Mammary epithelial cell (primary cell): ENCODE measurements at regions of chr17 and their contacts with region 1.

Region 1: DNA sequence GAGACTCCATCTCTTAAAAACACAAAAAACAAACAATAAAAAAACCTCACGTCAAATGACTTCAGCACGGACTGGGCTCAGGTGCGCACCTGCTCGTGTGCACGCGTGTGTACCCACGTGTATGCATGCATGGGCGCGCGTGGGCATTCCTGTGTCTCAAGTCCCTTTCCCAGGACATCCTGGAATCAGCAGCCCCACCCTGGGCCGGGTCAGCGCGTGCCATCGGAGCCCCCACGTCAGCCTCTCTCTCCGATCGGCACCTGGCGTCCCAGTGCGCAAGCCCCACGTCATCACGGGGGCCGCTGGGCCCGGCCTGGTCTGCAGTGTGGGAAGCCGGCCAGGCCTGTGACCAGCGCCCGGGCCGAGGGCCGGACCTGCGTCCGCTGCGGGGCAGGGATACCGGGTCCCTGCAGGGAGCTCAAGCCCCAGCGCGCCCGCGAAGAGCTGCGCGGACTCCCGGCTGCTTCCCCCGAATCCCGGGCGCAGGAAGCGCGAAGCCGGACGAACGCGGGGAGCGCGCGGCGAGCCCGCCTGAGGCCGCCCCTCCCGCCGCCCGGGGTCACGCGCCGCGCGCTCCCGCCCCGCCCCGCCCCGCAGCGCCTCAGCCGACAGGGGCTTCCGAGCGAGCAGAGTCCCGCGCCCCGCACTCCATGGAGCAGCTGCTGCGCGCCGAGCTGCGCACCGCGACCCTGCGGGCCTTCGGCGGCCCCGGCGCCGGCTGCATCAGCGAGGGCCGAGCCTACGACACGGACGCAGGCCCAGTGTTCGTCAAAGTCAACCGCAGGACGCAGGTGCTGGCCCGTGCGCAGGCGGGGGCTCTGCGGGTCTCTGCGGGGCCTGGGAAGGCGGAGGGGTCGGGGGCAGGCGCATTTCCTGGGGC is at the start of gene FN3K:
- DNase-seq: peak; percentile 29
- H3K4me3 ChIP-seq: peak within 1 kb of the TSS; percentile 50 to 56 (median 52)
- H3K27ac ChIP-seq: no peak within 1 kb of the TSS
- H3K4me1 ChIP-seq: peaks cover 7% of the 10 kb centered on the region
- H3K27me3 ChIP-seq: no peaks in the 10 kb centered on the region
- CTCF ChIP-seq: no peak
- total RNA-seq, gene FN3K: 2.2 to 4.2 TPM

Region 2: GRCh38 chr17:82623707-82624106 is 111.5 kb before region 1 on chr17:
- CTCF ChIA-PET with region 1: no interaction called
- dilution Hi-C with region 1: no loop called
- in situ Hi-C with region 1: no loop called
- intact Hi-C with region 1: no loop called
- DNase-seq: no peak
- H3K4me3 ChIP-seq: no peak overlapping the region
- H3K27ac ChIP-seq: no peak overlapping the region
- H3K4me1 ChIP-seq: no peaks in the 10 kb centered on the region
- H3K27me3 ChIP-seq: no peaks in the 10 kb centered on the region
- CTCF ChIP-seq: no peak

Region 3: DNA sequence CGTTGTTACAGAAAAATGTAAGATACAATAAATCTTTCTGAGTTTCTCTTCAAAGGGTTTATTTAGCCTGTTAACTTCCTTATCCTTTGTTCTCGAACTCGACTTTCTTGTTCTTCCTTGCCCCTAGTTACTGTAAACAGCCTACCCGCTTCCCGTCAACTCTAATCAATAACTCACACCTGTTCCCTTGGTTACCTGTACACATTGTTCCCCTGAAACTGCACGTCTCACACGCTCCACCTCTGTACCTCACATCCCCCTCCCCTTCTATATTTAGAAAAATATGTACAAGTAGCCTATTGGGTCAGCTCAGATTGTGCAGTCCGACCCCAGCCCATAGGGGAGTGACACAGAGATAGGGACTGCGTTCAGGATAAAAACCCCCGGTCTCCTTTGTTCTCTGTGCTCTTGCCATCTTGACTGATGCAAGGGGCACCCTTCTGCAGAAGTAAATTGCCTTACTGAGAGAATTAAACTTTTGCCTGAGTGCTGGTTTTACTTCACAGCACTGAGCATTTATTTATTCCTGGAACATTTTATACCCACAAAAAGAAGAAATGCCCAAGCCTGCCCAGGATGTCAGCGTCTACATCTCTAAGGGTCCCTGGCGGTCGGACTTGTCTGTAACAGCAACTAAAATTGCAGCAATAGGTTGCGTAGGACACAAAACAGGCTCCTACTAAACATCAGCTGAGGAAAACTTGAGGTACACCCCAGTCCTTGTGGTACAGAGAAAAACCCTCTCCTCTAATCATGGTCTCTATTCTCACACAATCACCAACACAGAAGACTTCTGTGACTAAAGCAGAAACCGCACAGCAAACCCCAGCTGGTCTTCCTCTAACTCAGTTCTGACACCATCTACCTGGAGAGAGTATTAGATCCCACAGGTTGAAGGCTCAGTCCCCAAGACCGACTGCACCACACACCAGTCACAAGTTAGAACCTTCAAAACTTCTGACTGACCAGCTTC is 98.3 kb before region 1 on chr17:
- CTCF ChIA-PET with region 1: no interaction called
- dilution Hi-C with region 1: loop called (anchors 5 kb)
- in situ Hi-C with region 1: no loop called
- intact Hi-C with region 1: no loop called
- DNase-seq: peak; percentile 6
- H3K4me3 ChIP-seq: no peak overlapping the region
- H3K27ac ChIP-seq: no peak overlapping the region
- H3K4me1 ChIP-seq: no peaks in the 10 kb centered on the region
- H3K27me3 ChIP-seq: no peaks in the 10 kb centered on the region
- CTCF ChIP-seq: no peak

Region 4: DNA sequence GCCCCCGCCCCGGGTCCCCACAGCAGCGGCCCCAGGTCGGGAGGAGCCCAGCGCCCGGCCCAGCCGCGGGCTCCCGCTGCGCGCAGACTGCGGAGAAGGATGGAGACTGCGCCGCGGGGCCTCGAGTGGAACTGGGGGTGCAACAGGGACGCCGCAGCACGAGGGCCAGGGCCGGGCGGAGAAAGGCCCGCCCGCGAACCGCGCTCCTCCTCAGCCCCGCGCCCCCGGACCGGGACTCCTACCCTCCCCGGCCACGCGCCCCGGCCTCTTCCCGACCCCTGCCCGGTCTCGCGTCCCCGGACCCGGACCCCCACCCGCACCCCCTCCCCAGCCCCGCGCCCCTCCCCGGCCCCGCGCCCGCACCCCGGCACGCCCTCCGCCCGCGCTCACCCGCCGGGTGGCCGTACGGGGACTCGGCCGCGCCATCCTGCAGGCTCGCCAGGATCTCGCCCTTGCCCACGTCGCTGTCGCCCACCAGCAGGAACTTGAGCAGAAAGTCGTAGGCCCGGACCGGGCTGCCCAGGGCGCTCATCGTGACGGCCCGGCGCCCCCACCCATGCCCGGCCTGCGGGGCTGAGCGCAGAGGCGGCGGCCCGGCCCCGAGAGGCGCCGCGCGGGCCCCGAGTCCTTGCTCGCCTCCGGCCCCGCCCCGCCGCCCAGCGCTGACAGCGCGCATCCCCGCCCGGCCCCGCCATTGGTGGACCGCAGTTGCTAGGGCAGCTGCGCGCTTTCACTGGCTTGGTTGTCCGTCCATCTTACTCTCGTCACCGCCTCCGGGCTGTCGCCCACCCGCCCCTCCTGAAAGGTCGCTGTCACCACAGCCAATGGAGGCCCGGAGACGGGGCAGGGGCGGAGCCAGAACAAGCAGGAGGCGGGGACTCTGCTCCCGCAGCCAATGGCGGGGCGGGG is 36.9 kb before region 1 on chr17 and contains the start of gene RAB40B:
- CTCF ChIA-PET with region 1: no interaction called
- dilution Hi-C with region 1: no loop called
- in situ Hi-C with region 1: no loop called
- intact Hi-C with region 1: no loop called
- DNase-seq: peak; percentile 97
- H3K4me3 ChIP-seq: peak within 1 kb of the TSS; percentile 53 to 79 (median 73)
- H3K27ac ChIP-seq: no peak within 1 kb of the TSS
- H3K4me1 ChIP-seq: peaks cover 31% of the 10 kb centered on the region
- H3K27me3 ChIP-seq: no peaks in the 10 kb centered on the region
- CTCF ChIP-seq: no peak
- total RNA-seq, gene RAB40B: 13.3 to 17.8 TPM